ENCODE measurements at regions of chr12 and their contacts with region 1.

Region 1: GRCh38 chr12:117273091-117273490 is 82.8 kb upstream of the FBXO21 start:
- DNase-seq: no peak
- ATAC-seq: no peak
- H3K4me3 ChIP-seq: no peak overlapping the region
- H3K4me3 Mint-ChIP-seq: no peak overlapping the region
- H3K27ac ChIP-seq: no peak overlapping the region
- H3K27ac Mint-ChIP-seq: no peak overlapping the region
- H3K4me1 ChIP-seq: no peaks in the 10 kb centered on the region
- H3K4me1 Mint-ChIP-seq: no peaks in the 10 kb centered on the region
- H3K27me3 ChIP-seq: no peaks in the 10 kb centered on the region
- H3K27me3 Mint-ChIP-seq: peaks cover 22% of the 10 kb centered on the region
- CTCF ChIP-seq: no peak

Region 2: DNA sequence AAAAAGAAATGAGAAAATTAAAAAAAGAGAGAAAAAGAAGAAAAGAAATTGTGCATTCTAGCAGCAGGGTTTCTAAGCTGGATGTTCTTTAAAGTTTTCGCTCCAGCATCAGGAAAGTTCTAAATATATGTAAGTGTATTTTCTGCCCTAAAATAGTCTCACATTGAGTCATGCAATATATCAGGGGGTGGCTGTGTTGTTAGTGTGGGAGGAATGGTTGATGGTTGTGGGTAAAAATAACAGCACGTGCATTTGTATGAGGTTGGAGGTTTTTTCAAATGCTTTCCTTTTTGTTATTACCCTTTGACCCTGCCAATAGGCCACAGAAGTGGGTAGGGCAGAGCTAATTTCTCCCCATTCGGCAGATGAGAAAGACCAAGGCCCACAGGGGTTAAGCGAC is 17.7 kb before region 1 on chr12:
- CTCF ChIA-PET with region 1: no interaction called
- POLR2A ChIA-PET with region 1: no interaction called
- intact Hi-C with region 1: no loop called
- DNase-seq: no peak
- ATAC-seq: no peak
- H3K4me3 ChIP-seq: no peak overlapping the region
- H3K4me3 Mint-ChIP-seq: no peak overlapping the region
- H3K27ac ChIP-seq: no peak overlapping the region
- H3K27ac Mint-ChIP-seq: no peak overlapping the region
- H3K4me1 ChIP-seq: no peaks in the 10 kb centered on the region
- H3K4me1 Mint-ChIP-seq: no peaks in the 10 kb centered on the region
- H3K27me3 ChIP-seq: no peaks in the 10 kb centered on the region
- H3K27me3 Mint-ChIP-seq: peaks cover 25% of the 10 kb centered on the region
- CTCF ChIP-seq: no peak

Region 3: DNA sequence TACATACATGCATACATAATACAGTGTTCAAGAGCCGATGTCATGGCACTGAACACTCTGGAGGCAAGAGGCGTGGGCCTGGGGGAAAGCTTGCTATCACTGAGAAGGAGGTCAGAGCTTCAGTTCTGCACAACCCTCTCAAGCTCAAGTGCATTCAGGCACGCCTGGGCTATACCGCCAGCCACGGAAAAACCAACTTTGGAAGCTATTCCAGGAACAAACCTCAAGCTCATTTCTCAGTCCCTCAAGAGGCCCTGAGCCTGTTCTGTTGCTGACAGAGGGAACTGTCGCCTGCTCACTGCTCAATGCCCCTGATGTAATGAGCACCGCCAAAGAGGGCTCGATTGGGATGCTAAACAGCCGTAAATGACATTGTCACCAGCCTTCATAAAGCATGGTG is 79.1 kb after region 1 on chr12:
- CTCF ChIA-PET with region 1: no interaction called
- POLR2A ChIA-PET with region 1: no interaction called
- intact Hi-C with region 1: loop called in 1 of 2 experiments (anchors 2 kb)
- DNase-seq: no peak
- ATAC-seq: no peak
- H3K4me3 ChIP-seq: no peak overlapping the region
- H3K4me3 Mint-ChIP-seq: no peak overlapping the region
- H3K27ac ChIP-seq: no peak overlapping the region
- H3K27ac Mint-ChIP-seq: no peak overlapping the region
- H3K4me1 ChIP-seq: no peaks in the 10 kb centered on the region
- H3K4me1 Mint-ChIP-seq: no peaks in the 10 kb centered on the region
- H3K27me3 ChIP-seq: no peaks in the 10 kb centered on the region
- H3K27me3 Mint-ChIP-seq: peaks cover 4% of the 10 kb centered on the region
- CTCF ChIP-seq: no peak